ENCODE measurements at regions of chr1 and their contacts with region 1.

Region 1: DNA sequence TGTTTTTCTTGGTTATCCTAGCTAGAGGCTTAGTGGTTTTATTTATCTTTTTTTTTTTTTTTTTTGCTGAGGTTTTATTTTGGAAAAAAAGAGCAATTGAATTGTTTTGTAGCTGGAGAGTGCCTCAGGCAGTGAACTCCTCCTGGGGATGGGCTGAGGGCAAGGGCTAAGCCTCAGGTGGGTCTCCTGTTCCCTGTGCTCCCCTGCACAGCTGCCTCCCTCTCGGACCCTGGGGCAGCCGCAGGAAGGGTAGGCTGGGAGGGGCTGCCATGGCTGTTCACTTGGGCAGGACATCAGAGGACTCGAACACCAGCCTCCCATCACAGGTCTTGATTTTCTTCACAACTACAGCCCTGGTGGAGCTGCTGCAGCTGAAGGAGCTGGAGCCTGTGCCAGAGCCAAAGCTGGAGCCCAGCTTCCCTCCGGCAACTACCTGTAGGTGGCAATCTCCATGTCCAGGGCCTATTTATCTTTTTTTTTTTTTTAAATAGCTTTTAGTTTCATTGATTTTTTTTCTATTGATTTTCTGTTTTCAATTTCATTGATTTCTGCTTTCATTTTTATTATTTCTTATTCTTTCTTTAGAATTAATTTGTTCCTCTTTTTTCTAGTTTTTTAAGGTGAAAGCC is 28.9 kb downstream of the LEPR start:
- DNase-seq: peak; percentile 34
- ATAC-seq: peak; percentile 95
- H3K4me3 Mint-ChIP-seq: no peak overlapping the region
- H3K27ac Mint-ChIP-seq: no peak overlapping the region
- H3K4me1 Mint-ChIP-seq: peaks cover 12% of the 10 kb centered on the region
- H3K27me3 Mint-ChIP-seq: peaks cover 5% of the 10 kb centered on the region; the same call in 1 of the 2 replicates
- CTCF ChIP-seq: no peak

Region 2: DNA sequence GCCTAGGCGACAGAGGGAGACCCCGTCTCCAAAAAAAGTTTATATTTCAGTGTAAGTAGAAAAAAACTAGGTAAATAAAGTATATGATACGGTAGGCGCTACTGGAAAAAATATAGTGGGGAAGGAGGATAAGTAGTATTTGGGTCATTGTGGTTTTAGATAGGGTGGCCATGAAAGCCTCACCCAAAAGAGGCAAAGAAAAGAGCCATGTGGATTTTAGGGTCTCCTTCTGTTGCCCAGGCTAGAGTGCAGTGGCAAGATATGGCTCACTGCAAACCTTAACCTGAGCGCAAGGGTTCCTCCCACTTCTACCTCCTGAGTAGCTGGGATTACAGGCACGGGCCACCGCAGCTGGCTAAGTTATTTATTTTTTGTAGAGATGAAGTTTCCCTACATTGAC is 11.7 kb before region 1 on chr1:
- CTCF ChIA-PET with region 1: interaction called, 14 read pairs
- POLR2A ChIA-PET with region 1: no interaction called
- DNase-seq: no peak
- ATAC-seq: no peak
- H3K4me3 Mint-ChIP-seq: no peak overlapping the region
- H3K27ac Mint-ChIP-seq: no peak overlapping the region
- H3K4me1 Mint-ChIP-seq: peaks cover 38% of the 10 kb centered on the region
- H3K27me3 Mint-ChIP-seq: no peaks in the 10 kb centered on the region
- CTCF ChIP-seq: no peak

Region 3: DNA sequence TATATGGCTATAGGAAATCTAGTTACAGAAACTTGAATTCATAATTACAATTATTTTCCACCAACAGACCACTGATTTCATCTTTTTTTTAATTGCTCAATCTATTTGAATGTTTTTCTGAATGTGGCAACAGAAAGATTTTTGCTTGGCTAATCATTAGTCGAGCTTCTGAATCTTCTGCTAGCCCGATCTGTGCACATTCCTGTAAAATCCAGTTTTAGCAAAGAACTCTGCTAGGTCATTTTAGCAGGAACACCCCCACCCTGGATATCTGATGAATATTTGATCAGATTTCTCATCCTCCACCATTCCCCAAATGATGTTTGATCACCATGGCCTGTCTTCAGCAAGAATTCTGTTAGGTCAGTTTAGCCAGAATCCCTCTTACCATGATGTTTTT is 147.4 kb after region 1 on chr1:
- CTCF ChIA-PET with region 1: no interaction called
- POLR2A ChIA-PET with region 1: no interaction called
- DNase-seq: no peak
- ATAC-seq: no peak
- H3K4me3 Mint-ChIP-seq: no peak overlapping the region
- H3K27ac Mint-ChIP-seq: no peak overlapping the region
- H3K4me1 Mint-ChIP-seq: peaks cover 4% of the 10 kb centered on the region
- H3K27me3 Mint-ChIP-seq: no peaks in the 10 kb centered on the region
- CTCF ChIP-seq: no peak

Measured in WTC11 (cell line).